Right ventricle myocardium inferior (tissue), 1 donor: ENCODE measurements at regions of chr13 and their contacts with region 1.

Region 1: DNA sequence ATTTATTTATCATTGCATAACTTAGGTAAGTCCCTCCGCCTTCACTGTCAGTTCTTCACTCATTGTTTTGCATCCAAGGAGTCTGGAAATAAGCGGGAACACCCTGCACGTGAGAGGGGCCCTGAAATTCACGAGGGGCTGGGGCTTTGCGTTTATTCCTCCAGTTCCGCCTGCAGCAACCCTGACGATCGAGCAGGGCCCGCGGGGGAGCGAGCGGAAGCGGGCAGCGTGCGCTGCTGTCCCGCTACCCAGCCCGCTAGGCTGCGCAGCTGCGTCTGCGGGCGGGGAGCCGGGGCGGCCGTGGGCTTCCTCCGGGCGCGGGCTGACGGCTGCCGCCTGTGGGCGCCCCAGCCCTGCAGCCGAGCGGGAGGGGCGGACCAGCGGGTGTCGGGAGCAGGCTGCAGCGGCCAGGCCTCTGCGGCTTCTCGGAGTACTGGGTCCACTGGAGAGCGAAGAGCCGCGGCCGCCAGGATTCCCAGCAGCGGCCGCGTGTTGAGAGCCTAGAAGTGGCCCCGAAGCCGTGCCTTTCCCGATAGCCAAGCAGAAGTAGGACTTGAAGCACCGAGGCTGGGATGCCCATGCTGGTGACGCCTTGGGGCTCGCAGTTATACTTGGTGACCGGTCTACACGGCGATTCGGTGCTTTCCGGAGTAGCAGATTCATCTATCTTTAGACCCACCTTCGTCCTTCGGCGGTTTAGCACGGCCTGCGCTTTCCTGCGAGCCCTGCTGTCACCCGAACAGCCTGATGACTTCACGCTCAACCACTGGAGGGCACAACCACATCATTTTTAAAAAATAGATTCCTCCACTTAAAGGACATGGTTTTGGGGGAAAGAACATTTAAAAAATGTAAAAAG is 32.9 kb upstream of the SACS start:
- DNase-seq: peak; percentile 88
- ATAC-seq: peak; percentile 95

Region 2: GRCh38 chr13:23025864-23026608 is 440.3 kb before region 1 on chr13:
- intact Hi-C with region 1: no loop called
- DNase-seq: no peak
- ATAC-seq: no peak

Region 3: DNA sequence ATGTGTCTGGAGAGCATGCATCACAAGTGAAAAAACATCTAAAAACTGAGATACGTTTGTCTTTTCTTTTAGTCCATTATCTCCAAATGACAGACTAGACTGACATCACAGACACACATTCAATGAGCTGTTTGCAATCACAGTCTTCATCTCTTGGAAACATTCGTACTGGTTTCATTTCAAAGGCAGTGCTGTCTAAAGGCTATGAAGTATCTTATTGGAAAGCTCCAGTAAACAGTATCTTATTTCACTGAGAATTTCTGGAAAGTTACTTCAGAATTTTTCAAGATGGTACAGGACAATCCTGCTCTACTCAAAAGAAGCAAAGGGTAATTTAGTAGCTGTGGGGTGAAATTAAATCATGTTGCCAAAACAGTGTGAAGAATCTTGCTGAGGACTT is 50.3 kb after region 1 on chr13:
- intact Hi-C with region 1: loop called (anchors 5 kb)
- DNase-seq: no peak
- ATAC-seq: no peak

Region 4: DNA sequence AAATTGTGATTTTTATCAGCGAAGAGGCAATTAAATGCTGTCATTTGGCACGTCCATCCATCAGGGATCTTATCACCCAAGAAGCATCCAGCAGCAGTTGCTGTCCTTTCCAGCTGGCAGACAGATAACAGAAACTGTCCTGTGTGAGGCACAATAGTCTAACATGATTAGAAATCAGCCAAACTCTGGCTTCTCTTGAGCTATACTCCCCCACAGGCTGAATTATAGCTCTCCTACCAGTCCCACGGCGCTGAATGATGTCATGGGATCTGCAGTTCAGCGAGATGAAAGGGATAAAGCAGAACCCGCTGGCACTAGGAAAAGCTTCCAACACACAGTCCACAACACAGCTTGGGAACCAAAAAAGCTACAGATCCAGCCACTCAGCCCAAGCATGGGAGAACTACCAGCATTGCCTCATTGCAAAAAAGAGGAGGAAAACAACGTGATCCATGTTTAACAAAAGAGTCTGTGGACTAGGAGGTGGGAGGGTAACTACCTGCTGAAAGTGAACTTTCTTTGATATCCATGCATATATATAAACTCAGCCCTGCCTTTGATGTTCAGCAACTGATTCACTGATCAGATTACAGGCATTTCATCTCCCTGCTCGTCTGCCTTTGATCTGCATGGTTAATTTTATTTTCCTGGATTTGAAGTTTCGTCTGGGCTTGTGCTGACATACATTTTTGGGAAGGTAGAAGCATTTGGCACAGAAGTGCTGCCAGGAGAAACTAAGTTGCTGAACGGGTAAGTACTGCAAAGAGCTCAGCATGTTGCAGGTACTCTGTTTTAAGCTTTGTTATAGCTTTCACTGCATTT is 103.9 kb after region 1 on chr13 and contains the start of gene TNFRSF19:
- intact Hi-C with region 1: loop called (anchors 2 kb)
- DNase-seq: no peak
- ATAC-seq: peak; percentile 94
- total RNA-seq, gene TNFRSF19: 36.5 TPM

Region 5: GRCh38 chr13:23579072-23579895 is 112.9 kb after region 1 on chr13:
- intact Hi-C with region 1: loop called (anchors 2 kb)
- DNase-seq: peak; percentile 96
- ATAC-seq: peak; percentile 99

Region 6: GRCh38 chr13:23707674-23708073 is 241.3 kb after region 1 on chr13:
- intact Hi-C with region 1: loop called (anchors 5 kb)
- DNase-seq: no peak
- ATAC-seq: no peak

Region 7: GRCh38 chr13:23871616-23872220 is 405.3 kb after region 1 on chr13:
- intact Hi-C with region 1: loop called (anchors 1 kb)
- DNase-seq: no peak
- ATAC-seq: peak; percentile 20